ENCODE measurements at regions of chr12 and their contacts with region 1.

Region 1: GRCh38 chr12:55073043-55074022 is 52.9 kb upstream of the OR9K2 start:
- DNase-seq: peak; percentile 64 to 82 (median 76)
- H3K4me3 ChIP-seq: no peak overlapping the region
- H3K4me3 Mint-ChIP-seq: no peak overlapping the region
- H3K27ac ChIP-seq: no peak overlapping the region
- H3K27ac Mint-ChIP-seq: no peak overlapping the region
- H3K4me1 ChIP-seq: no peaks in the 10 kb centered on the region
- H3K4me1 Mint-ChIP-seq: peaks cover 1% of the 10 kb centered on the region
- H3K27me3 ChIP-seq: peaks cover 0 to 4% of the 10 kb centered on the region in 2 donors
- H3K27me3 Mint-ChIP-seq: peaks cover 0 to 4% (median 0%) of the 10 kb centered on the region in 3 donors
- CTCF ChIP-seq: peak; percentile 84

Region 2: GRCh38 chr12:54352022-54352531 is 721.3 kb before region 1 on chr12:
- intact Hi-C with region 1: no loop called
- DNase-seq: no peak
- H3K4me3 ChIP-seq: no peak overlapping the region
- H3K4me3 Mint-ChIP-seq: no peak overlapping the region
- H3K27ac ChIP-seq: no peak overlapping the region
- H3K27ac Mint-ChIP-seq: peak overlapping the region in 5 of 7 donors; percentile 20 to 64 (median 60)
- H3K4me1 ChIP-seq: peaks cover 5 to 10% of the 10 kb centered on the region in 2 donors
- H3K4me1 Mint-ChIP-seq: peaks cover 21% of the 10 kb centered on the region
- H3K27me3 ChIP-seq: no peaks in the 10 kb centered on the region
- H3K27me3 Mint-ChIP-seq: peaks cover 7 to 11% (median 8%) of the 10 kb centered on the region in 3 donors
- CTCF ChIP-seq: no peak

Region 3: GRCh38 chr12:54723379-54724256 is 349.7 kb before region 1 on chr12:
- intact Hi-C with region 1: loop called in 1 of 2 experiments (anchors 10 kb)
- DNase-seq: peak; percentile 19 to 53 (median 38)
- H3K4me3 ChIP-seq: no peak overlapping the region
- H3K4me3 Mint-ChIP-seq: no peak overlapping the region
- H3K27ac ChIP-seq: no peak overlapping the region
- H3K27ac Mint-ChIP-seq: peak overlapping the region in 1 of 7 donors; percentile 16
- H3K4me1 ChIP-seq: peaks cover 0 to 4% of the 10 kb centered on the region in 2 donors
- H3K4me1 Mint-ChIP-seq: peaks cover 16% of the 10 kb centered on the region
- H3K27me3 ChIP-seq: no peaks in the 10 kb centered on the region
- H3K27me3 Mint-ChIP-seq: peaks cover 0 to 2% (median 2%) of the 10 kb centered on the region in 3 donors
- CTCF ChIP-seq: peak; percentile 84

Region 4: GRCh38 chr12:54749191-54749818 is 324.0 kb before region 1 on chr12:
- intact Hi-C with region 1: loop called in 1 of 2 experiments (anchors 5 kb)
- DNase-seq: peak; percentile 44 to 71 (median 57)
- H3K4me3 ChIP-seq: no peak overlapping the region
- H3K4me3 Mint-ChIP-seq: no peak overlapping the region
- H3K27ac ChIP-seq: no peak overlapping the region
- H3K27ac Mint-ChIP-seq: no peak overlapping the region
- H3K4me1 ChIP-seq: peaks cover 0 to 11% of the 10 kb centered on the region in 2 donors
- H3K4me1 Mint-ChIP-seq: peaks cover 11% of the 10 kb centered on the region
- H3K27me3 ChIP-seq: no peaks in the 10 kb centered on the region
- H3K27me3 Mint-ChIP-seq: peaks cover 0 to 4% (median 0%) of the 10 kb centered on the region in 3 donors
- CTCF ChIP-seq: peak; percentile 78

Region 5: GRCh38 chr12:54830199-54830598 is 243.1 kb before region 1 on chr12:
- intact Hi-C with region 1: loop called in 1 of 2 experiments (anchors 10 kb)
- DNase-seq: no peak
- H3K4me3 ChIP-seq: no peak overlapping the region
- H3K4me3 Mint-ChIP-seq: no peak overlapping the region
- H3K27ac ChIP-seq: no peak overlapping the region
- H3K27ac Mint-ChIP-seq: peak overlapping the region in 1 of 7 donors; percentile 52
- H3K4me1 ChIP-seq: peaks cover 16 to 18% of the 10 kb centered on the region in 2 donors
- H3K4me1 Mint-ChIP-seq: peaks cover 29% of the 10 kb centered on the region
- H3K27me3 ChIP-seq: no peaks in the 10 kb centered on the region
- H3K27me3 Mint-ChIP-seq: peaks cover 1 to 2% (median 1%) of the 10 kb centered on the region in 3 donors
- CTCF ChIP-seq: no peak

Region 6: GRCh38 chr12:54853995-54854566 is 219.3 kb before region 1 on chr12 and contains the start of gene MUCL1:
- intact Hi-C with region 1: loop called in 1 of 2 experiments (anchors 10 kb)
- DNase-seq: peak; percentile 58 to 79 (median 74)
- H3K4me3 ChIP-seq: no peak within 1 kb of the TSS
- H3K4me3 Mint-ChIP-seq: no peak within 1 kb of the TSS
- H3K27ac ChIP-seq: no peak within 1 kb of the TSS
- H3K27ac Mint-ChIP-seq: peak within 1 kb of the TSS in 1 of 7 donors; percentile 68
- H3K4me1 ChIP-seq: peaks cover 14% of the 10 kb centered on the region in 2 donors
- H3K4me1 Mint-ChIP-seq: peaks cover 29% of the 10 kb centered on the region
- H3K27me3 ChIP-seq: no peaks in the 10 kb centered on the region
- H3K27me3 Mint-ChIP-seq: no peaks in the 10 kb centered on the region
- CTCF ChIP-seq: peak; percentile 96
- polyA plus RNA-seq, gene MUCL1: not detected

Region 7: DNA sequence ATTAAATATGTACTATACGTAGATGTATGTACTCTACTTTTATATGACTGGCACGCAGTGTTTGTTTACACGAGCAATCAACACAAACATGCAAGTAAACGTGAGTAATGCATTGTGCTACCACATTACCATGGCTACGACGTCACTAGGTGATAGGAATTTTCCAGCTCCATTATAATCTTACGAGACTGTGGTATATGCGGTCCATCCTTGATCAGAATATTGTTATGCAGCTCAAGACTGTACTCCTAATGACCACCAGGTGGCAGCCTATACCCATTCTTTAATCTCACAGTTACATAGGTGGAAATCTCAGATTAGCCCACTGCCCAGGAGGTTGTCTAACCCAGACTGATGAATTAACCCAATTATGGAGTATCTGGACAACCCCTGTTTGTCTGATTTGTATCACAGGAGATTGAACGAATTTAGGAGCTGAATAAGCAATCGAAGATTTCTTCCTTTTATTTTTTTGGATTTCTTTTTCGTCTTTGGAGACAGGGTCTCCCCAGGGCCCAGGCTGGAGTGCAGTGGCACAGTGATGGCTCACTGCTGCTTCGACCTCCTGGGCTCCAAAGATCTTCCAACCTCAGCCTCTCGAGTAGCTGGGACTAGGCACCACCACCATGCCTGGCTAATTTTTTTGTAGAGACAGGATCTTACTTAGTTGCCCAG is 80.0 kb before region 1 on chr12:
- intact Hi-C with region 1: loop called (anchors 1 to 2 kb)
- DNase-seq: peak; percentile 58 to 79 (median 73)
- H3K4me3 ChIP-seq: no peak overlapping the region
- H3K4me3 Mint-ChIP-seq: no peak overlapping the region
- H3K27ac ChIP-seq: no peak overlapping the region
- H3K27ac Mint-ChIP-seq: peak overlapping the region in 2 of 7 donors; percentile 14 to 28
- H3K4me1 ChIP-seq: peaks cover 14 to 17% of the 10 kb centered on the region in 2 donors
- H3K4me1 Mint-ChIP-seq: peaks cover 18% of the 10 kb centered on the region
- H3K27me3 ChIP-seq: no peaks in the 10 kb centered on the region
- H3K27me3 Mint-ChIP-seq: peaks cover 0 to 7% (median 4%) of the 10 kb centered on the region in 3 donors
- CTCF ChIP-seq: peak; percentile 93

Region 8: DNA sequence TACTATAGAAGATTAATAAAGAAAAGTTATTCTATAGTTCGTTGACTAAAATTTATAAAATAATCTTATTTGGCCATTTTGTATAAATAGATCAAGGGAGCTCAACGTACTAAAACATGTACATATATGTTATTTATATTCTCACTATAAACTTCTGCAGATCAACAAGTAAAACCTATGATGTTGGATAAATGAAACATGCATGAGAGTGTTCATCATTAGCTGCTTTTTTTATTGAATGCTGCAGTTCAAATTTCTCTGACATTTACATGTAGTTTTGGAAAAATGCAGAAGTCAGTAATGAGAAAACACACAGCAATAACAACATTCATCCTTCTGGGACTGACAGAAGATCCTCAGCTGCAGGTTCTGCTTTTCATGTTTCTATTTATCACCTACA is 418.7 kb after region 1 on chr12 and contains the start of gene OR6C68:
- intact Hi-C with region 1: no loop called
- DNase-seq: no peak
- H3K4me3 ChIP-seq: no peak within 1 kb of the TSS
- H3K4me3 Mint-ChIP-seq: no peak within 1 kb of the TSS
- H3K27ac ChIP-seq: no peak within 1 kb of the TSS
- H3K27ac Mint-ChIP-seq: no peak within 1 kb of the TSS
- H3K4me1 ChIP-seq: no peaks in the 10 kb centered on the region
- H3K4me1 Mint-ChIP-seq: no peaks in the 10 kb centered on the region
- H3K27me3 ChIP-seq: peaks cover 5 to 6% of the 10 kb centered on the region in 2 donors
- H3K27me3 Mint-ChIP-seq: peaks cover 4 to 5% (median 4%) of the 10 kb centered on the region in 3 donors
- CTCF ChIP-seq: no peak
- polyA plus RNA-seq, gene OR6C68: not detected